Activated B cell treated with CpG ODN at 0.5 μM for 24 hours (primary cell): ENCODE measurements at regions of chr13 and their contacts with region 1.

Region 1: DNA sequence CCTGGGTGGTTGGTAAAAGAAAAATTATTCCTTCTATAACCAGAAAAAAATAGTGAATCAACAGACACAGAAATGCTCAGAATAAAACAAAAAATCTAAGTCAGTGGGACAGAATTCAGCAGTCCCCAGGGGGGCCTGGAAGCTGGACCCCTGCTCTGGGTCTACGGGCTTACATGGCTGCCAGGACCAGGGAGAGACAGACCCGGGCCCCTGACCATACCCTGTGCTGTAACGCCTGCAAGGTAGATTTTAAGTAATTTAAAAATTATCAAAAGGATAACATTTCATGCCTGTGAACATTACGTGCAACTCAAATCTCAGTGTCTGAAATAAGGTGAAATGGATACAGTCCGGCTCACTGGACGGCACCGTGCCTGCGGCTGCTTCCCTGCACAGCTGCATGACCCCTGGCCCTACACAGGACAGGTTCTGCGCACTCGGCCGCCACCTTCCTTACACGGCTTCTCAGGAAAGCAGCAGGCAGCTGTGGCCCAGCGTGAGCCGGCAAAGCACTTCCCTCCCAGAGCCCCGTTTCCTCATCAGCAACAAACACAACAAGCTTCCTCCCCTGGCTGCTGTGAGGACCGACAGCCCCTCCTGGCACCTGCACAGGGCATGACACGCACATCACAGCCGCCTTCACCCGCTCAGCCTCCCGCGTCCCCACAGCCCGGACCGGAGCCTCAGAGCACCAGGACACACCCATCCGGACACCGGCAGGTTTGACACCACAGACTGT is 22.2 kb downstream of the RASA3 start:
- DNase-seq: peak; percentile 60
- ATAC-seq: peak; percentile 94
- H3K4me3 Mint-ChIP-seq: peak overlapping the region; percentile 73
- H3K27ac Mint-ChIP-seq: peak overlapping the region; percentile 86
- H3K4me1 Mint-ChIP-seq: peaks cover 43% of the 10 kb centered on the region
- H3K27me3 Mint-ChIP-seq: no peaks in the 10 kb centered on the region
- CTCF ChIP-seq: no peak

Region 2: DNA sequence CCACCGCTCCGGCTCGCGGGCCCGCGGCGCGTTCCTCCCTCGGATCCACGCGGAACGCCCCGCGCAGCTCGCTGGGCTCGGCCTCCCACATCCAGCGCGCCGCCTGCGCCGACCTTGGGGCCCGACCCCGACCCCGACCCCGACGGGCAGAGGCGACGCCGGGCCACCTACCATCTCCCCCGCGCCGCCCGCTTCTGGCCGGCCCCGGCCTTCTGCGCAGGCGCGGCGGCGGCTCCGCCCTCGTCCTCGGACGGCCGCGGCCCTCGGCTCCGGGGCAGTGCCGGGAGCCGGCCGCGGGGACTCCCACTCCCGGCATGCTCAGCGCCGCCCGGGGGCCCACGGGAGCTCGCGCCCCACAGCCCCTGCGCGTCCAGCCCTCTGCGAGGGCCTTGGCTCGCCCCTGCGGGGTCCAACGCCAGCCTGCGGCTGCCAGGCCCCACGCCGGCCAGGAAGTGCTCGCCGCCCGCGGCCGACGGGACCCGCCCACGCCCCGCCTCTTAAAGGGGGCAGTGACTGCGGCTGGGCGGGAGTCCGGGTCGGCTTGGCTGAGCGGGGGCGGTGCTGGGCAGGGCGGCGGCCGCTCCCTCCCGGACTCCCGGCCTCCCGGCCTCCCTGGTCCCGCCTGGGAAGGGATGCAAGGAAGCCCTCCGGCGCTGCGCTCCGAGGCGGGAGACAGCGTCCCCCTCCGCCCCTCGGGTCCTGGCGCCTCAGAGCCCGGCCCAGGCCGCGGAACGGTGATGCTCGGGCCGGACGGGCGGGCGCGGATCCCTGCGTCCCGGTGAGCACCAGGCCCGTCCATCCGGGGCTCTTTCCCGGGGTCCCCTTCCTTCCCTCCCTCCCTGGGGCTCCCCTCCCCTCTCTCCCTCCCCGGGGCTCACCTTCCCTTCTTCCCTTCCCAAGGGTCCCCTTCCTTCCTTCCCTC is 619.5 kb before region 1 on chr13 and contains the start of gene DCUN1D2:
- CTCF ChIA-PET with region 1: no interaction called
- POLR2A ChIA-PET with region 1: no interaction called
- intact Hi-C with region 1: loop called (anchors 5 kb)
- DNase-seq: peak; percentile 91
- ATAC-seq: peak; percentile 90
- H3K4me3 Mint-ChIP-seq: peak within 1 kb of the TSS; percentile 90
- H3K27ac Mint-ChIP-seq: peak within 1 kb of the TSS; percentile 77
- H3K4me1 Mint-ChIP-seq: peaks cover 52% of the 10 kb centered on the region
- H3K27me3 Mint-ChIP-seq: no peaks in the 10 kb centered on the region
- CTCF ChIP-seq: no peak
- total RNA-seq, gene DCUN1D2: 19.8 and 26.2 TPM in 2 replicates

Region 3: DNA sequence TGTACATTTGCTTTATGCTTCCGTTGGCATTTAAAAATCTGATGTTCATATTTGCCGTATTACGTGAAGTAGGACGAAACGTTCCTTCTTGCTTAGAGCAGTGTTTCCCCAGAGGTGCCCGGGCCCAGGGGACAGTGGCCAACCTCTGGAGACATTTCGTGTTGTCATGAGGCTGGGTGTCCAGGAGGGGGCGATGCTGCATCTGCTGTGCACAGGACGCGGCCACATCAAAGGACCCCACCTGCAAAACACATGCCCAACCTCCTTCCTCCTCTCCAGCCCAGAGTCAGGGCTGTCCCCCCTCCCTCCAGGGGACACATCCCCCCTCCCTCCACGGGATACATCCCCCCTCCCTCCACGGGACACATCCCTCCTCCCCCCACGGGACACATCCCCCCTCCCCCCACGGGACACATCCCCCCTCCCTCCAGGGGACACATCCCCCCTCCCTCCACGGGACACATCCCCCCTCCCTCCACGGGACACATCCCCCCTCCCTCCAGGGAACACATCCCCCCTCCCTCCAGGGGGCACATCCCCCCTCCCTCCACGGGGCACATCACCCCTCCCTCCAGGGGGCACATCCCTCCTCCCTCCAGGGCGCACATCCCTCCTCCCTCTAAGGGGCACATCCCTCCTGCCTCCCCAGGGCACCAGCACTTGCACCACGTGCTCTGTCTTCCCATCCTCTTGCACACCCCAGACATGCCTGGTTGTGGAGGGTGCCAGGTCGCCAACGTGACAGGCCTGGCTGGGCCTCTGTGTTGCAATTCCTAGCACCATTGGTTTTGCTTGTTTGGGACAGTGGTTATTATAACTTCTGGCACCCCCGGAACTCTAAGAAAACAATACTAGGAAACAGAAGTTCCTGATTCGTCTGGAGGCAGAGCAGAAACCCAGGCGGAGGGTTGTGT is 293.1 kb before region 1 on chr13:
- CTCF ChIA-PET with region 1: interaction called, 3 read pairs
- POLR2A ChIA-PET with region 1: interaction called, 3 read pairs
- intact Hi-C with region 1: loop called (anchors 1 kb)
- DNase-seq: peak; percentile 69
- ATAC-seq: peak; percentile 87
- H3K4me3 Mint-ChIP-seq: peak overlapping the region; percentile 98
- H3K27ac Mint-ChIP-seq: peak overlapping the region; percentile 70
- H3K4me1 Mint-ChIP-seq: peaks cover 24% of the 10 kb centered on the region
- H3K27me3 Mint-ChIP-seq: no peaks in the 10 kb centered on the region
- CTCF ChIP-seq: no peak

Region 4: DNA sequence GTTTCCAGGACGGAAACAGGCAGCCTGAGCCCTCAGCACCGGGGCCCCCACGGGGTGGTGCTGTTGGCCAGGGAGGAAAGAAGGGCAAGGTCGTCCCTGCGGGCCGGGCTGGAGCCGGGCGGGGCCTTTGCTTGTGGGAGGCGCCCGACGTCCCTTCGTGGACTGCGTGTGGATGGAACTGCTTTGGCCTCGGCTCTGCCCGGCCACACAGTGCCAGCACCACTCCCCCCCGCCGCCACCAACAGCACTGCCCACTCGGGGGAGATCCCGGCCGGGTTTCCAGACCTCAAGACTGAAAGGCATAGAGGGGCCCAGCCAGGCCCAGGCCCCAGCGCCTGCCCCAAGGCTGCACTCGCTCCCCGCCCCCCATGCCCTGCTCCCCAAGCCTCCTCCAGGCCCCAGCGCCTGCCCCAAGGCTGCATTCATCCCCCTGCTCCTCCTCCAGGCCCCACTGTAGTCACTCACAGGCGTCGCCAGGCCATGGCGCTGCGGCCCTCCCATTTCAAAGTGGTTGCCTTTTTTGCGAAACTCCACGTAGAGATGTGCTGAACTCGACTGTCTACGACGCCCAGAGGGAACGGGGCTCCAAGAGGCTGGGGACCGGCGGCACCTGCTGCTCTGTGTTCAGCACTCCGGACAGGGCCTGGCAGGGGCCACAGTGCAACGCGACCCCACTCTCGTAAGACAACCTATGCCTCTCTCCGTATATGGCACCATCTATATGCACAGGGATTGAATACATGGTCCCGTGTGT is 158.8 kb before region 1 on chr13:
- CTCF ChIA-PET with region 1: interaction called, 4 read pairs
- POLR2A ChIA-PET with region 1: interaction called, 3 read pairs
- intact Hi-C with region 1: loop called (anchors 1 kb)
- DNase-seq: peak; percentile 60
- ATAC-seq: peak; percentile 95
- H3K4me3 Mint-ChIP-seq: peak overlapping the region; percentile 32
- H3K27ac Mint-ChIP-seq: no peak overlapping the region
- H3K4me1 Mint-ChIP-seq: peaks cover 17% of the 10 kb centered on the region
- H3K27me3 Mint-ChIP-seq: no peaks in the 10 kb centered on the region
- CTCF ChIP-seq: peak; percentile 41

Region 5: GRCh38 chr13:114025714-114026431 is 84.4 kb before region 1 on chr13:
- CTCF ChIA-PET with region 1: interaction called, 6 read pairs
- POLR2A ChIA-PET with region 1: no interaction called
- intact Hi-C with region 1: loop called (anchors 1 kb)
- DNase-seq: no peak
- ATAC-seq: no peak
- H3K4me3 Mint-ChIP-seq: no peak overlapping the region
- H3K27ac Mint-ChIP-seq: peak overlapping the region; percentile 78
- H3K4me1 Mint-ChIP-seq: peaks cover 68% of the 10 kb centered on the region
- H3K27me3 Mint-ChIP-seq: no peaks in the 10 kb centered on the region
- CTCF ChIP-seq: no peak

Region 6: DNA sequence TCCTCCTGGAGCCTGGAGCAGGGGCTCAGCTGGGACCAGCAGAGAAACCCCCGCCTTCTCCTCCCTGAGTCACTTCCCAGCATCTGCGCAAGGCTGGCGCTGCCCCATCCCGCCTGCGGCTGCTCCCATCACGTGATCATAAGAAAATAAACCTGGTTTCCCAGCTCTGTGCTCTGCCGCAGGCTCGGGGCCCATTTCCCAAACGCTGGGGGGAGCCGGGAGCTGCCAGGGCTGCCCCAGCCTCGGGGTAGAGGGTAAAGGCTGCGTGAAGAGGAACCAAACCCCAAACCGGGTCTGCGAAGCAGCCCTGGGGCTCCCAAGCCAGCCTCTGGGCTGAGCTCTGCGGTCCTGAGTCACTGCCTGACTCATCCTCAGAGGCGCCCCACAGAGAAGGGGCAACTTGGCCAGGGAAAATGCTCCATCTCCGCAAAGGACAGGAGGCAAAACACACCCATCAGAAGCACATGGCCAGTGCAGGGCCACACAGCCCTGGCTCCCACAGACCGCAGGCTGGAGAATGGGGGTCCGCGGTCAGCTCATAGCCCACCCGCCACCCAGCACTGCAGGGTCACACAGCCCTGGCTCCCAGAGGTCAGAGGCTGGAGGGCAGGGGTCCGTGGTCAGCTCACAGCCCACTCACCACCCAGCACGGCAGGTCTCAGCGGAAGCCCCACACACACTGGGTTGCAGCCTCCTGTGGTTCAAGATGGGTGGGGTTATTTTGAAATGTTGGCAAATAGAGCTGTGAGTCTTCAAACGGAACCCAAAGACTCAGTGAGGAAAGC is 44.9 kb before region 1 on chr13:
- CTCF ChIA-PET with region 1: interaction called, 3 read pairs
- POLR2A ChIA-PET with region 1: interaction called, 11 read pairs
- intact Hi-C with region 1: loop called (anchors 2 kb)
- DNase-seq: peak; percentile 61
- ATAC-seq: peak; percentile 81
- H3K4me3 Mint-ChIP-seq: peak overlapping the region; percentile 82
- H3K27ac Mint-ChIP-seq: peak overlapping the region; percentile 91
- H3K4me1 Mint-ChIP-seq: peaks cover 68% of the 10 kb centered on the region
- H3K27me3 Mint-ChIP-seq: no peaks in the 10 kb centered on the region
- CTCF ChIP-seq: no peak

Region 7: GRCh38 chr13:114087430-114087829 is 22.8 kb before region 1 on chr13:
- CTCF ChIA-PET with region 1: no interaction called
- POLR2A ChIA-PET with region 1: no interaction called
- intact Hi-C with region 1: no loop called
- DNase-seq: no peak
- ATAC-seq: no peak
- H3K4me3 Mint-ChIP-seq: no peak overlapping the region
- H3K27ac Mint-ChIP-seq: no peak overlapping the region
- H3K4me1 Mint-ChIP-seq: peaks cover 19% of the 10 kb centered on the region
- H3K27me3 Mint-ChIP-seq: no peaks in the 10 kb centered on the region
- CTCF ChIP-seq: no peak

Region 8: DNA sequence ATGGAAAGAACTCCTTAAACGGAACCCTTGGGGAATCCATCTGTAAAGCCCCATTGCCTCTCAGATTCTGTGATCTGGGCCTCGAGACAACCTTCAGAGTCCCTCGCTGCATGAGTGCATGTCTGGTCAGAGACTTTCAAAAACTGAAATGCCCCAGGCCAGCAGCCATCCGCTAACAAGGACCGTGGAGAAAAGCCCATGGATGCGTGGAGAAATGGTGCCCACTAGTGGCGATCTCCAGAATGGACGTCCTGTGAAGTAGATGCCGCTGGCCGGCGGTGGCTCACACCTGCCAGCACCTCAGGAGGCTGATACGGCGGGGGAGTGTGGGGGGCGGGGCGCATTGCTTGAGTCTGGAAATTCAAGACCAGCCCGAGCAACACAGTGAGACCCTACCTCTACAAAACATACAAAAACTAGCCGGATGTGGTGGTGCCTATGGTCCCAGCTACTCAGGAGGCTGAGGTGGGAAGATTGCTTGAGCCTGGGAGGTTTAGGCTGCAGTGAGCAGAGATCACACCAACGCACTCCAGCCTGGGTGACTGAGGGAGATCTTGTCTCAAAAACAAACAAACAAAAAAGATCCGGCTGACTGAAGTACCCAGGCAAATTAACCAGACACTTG is 116.6 kb after region 1 on chr13:
- CTCF ChIA-PET with region 1: interaction called, 7 read pairs
- POLR2A ChIA-PET with region 1: no interaction called
- intact Hi-C with region 1: loop called (anchors 1 kb)
- DNase-seq: peak; percentile 74
- ATAC-seq: peak; percentile 94
- H3K4me3 Mint-ChIP-seq: no peak overlapping the region
- H3K27ac Mint-ChIP-seq: no peak overlapping the region
- H3K4me1 Mint-ChIP-seq: peaks cover 19% of the 10 kb centered on the region
- H3K27me3 Mint-ChIP-seq: peaks cover 14% of the 10 kb centered on the region
- CTCF ChIP-seq: no peak